Naive thymus-derived CD4-positive, alpha-beta T cell (primary cell): ENCODE measurements at regions of chr1 and their contacts with region 1.

Region 1: GRCh38 chr1:209692745-209693504 is 11.7 kb upstream of the HSD11B1 start:
- DNase-seq: peak; percentile 36 to 66 (median 57)
- ATAC-seq: peak; percentile 75
- H3K4me3 ChIP-seq: no peak overlapping the region
- H3K4me3 Mint-ChIP-seq: no peak overlapping the region
- H3K27ac ChIP-seq: no peak overlapping the region
- H3K27ac Mint-ChIP-seq: peak overlapping the region in 5 of 9 donors; percentile 14 to 74 (median 37)
- H3K4me1 ChIP-seq: peaks cover 0 to 19% of the 10 kb centered on the region in 2 donors
- H3K4me1 Mint-ChIP-seq: peaks cover 16 to 48% (median 30%) of the 10 kb centered on the region in 7 donors
- H3K27me3 ChIP-seq: no peaks in the 10 kb centered on the region
- H3K27me3 Mint-ChIP-seq: no peaks in the 10 kb centered on the region

Region 2: GRCh38 chr1:209202830-209203439 is 490.0 kb before region 1 on chr1:
- CTCF ChIA-PET with region 1: no interaction called
- POLR2A ChIA-PET with region 1: no interaction called
- intact Hi-C with region 1: loop called in 1 of 2 experiments (anchors 5 kb)
- DNase-seq: peak in 3 of 9 donors; percentile 3 to 13 (median 10)
- ATAC-seq: no peak
- H3K4me3 ChIP-seq: no peak overlapping the region
- H3K4me3 Mint-ChIP-seq: no peak overlapping the region
- H3K27ac ChIP-seq: no peak overlapping the region
- H3K27ac Mint-ChIP-seq: no peak overlapping the region
- H3K4me1 ChIP-seq: no peaks in the 10 kb centered on the region
- H3K4me1 Mint-ChIP-seq: peaks cover 0 to 7% (median 4%) of the 10 kb centered on the region in 7 donors
- H3K27me3 ChIP-seq: no peaks in the 10 kb centered on the region
- H3K27me3 Mint-ChIP-seq: peaks cover 24 to 53% (median 38%) of the 10 kb centered on the region in 5 donors

Region 3: GRCh38 chr1:209554761-209555611 is 137.9 kb before region 1 on chr1:
- CTCF ChIA-PET with region 1: no interaction called
- POLR2A ChIA-PET with region 1: no interaction called
- intact Hi-C with region 1: no loop called
- DNase-seq: no peak
- ATAC-seq: no peak
- H3K4me3 ChIP-seq: no peak overlapping the region
- H3K4me3 Mint-ChIP-seq: no peak overlapping the region
- H3K27ac ChIP-seq: no peak overlapping the region
- H3K27ac Mint-ChIP-seq: no peak overlapping the region
- H3K4me1 ChIP-seq: no peaks in the 10 kb centered on the region
- H3K4me1 Mint-ChIP-seq: no peaks in the 10 kb centered on the region
- H3K27me3 ChIP-seq: no peaks in the 10 kb centered on the region
- H3K27me3 Mint-ChIP-seq: peaks cover 0 to 24% (median 0%) of the 10 kb centered on the region in 5 donors

Region 4: GRCh38 chr1:209576798-209577197 is 116.1 kb before region 1 on chr1:
- CTCF ChIA-PET with region 1: interaction called, 12 read pairs
- POLR2A ChIA-PET with region 1: no interaction called
- intact Hi-C with region 1: loop called (anchors 1 kb)
- DNase-seq: peak in 8 of 9 donors; percentile 29 to 77 (median 47)
- ATAC-seq: peak; percentile 85
- H3K4me3 ChIP-seq: no peak overlapping the region
- H3K4me3 Mint-ChIP-seq: no peak overlapping the region
- H3K27ac ChIP-seq: no peak overlapping the region
- H3K27ac Mint-ChIP-seq: no peak overlapping the region
- H3K4me1 ChIP-seq: no peaks in the 10 kb centered on the region
- H3K4me1 Mint-ChIP-seq: peaks cover 0 to 6% (median 0%) of the 10 kb centered on the region in 7 donors
- H3K27me3 ChIP-seq: no peaks in the 10 kb centered on the region
- H3K27me3 Mint-ChIP-seq: peaks cover 0 to 35% (median 5%) of the 10 kb centered on the region in 5 donors

Region 5: DNA sequence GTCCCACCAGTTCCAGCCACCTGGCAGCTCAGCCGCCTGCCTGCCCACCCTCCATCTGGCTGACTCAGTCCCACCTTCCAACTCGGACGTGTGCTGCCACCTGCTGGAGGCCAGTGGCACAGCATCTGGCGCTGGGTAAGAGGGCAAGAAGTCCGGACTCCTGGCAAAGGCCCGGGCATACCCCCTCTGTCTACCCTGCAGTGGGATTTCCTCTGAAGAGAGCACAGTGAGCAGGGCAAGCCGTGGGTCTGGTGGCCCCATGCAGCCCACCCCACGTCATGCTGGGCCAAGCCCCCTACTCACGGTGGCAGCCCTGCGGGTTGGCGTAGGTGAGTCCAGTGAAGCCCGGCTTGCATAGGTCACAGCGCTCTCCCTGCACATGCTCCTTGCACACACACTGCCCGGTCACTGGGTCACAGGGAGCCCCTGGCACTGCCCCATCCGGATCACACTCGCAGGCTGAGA is 65.2 kb before region 1 on chr1:
- CTCF ChIA-PET with region 1: interaction called, 3 read pairs
- POLR2A ChIA-PET with region 1: no interaction called
- intact Hi-C with region 1: loop called (anchors 1 to 2 kb)
- DNase-seq: peak; percentile 29 to 85 (median 61)
- ATAC-seq: peak; percentile 79
- H3K4me3 ChIP-seq: no peak overlapping the region
- H3K4me3 Mint-ChIP-seq: no peak overlapping the region
- H3K27ac ChIP-seq: no peak overlapping the region
- H3K27ac Mint-ChIP-seq: no peak overlapping the region
- H3K4me1 ChIP-seq: no peaks in the 10 kb centered on the region
- H3K4me1 Mint-ChIP-seq: peaks cover 0 to 14% (median 3%) of the 10 kb centered on the region in 7 donors
- H3K27me3 ChIP-seq: no peaks in the 10 kb centered on the region
- H3K27me3 Mint-ChIP-seq: no peaks in the 10 kb centered on the region

Region 6: GRCh38 chr1:209674957-209675564 is 17.9 kb before region 1 on chr1 and contains the start of gene G0S2:
- CTCF ChIA-PET with region 1: interaction called, 8 read pairs
- POLR2A ChIA-PET with region 1: no interaction called
- intact Hi-C with region 1: loop called in 1 of 2 experiments (anchors 2 kb)
- DNase-seq: peak in 3 of 9 donors; percentile 2 to 70 (median 15)
- ATAC-seq: peak; percentile 64
- H3K4me3 ChIP-seq: peak within 1 kb of the TSS; percentile 40
- H3K4me3 Mint-ChIP-seq: peak within 1 kb of the TSS; percentile 47 to 88 (median 80)
- H3K27ac ChIP-seq: no peak within 1 kb of the TSS
- H3K27ac Mint-ChIP-seq: peak within 1 kb of the TSS in 2 of 9 donors; percentile 36 to 73
- H3K4me1 ChIP-seq: peaks cover 10 to 18% of the 10 kb centered on the region in 2 donors
- H3K4me1 Mint-ChIP-seq: peaks cover 27 to 74% (median 43%) of the 10 kb centered on the region in 7 donors
- H3K27me3 ChIP-seq: no peaks in the 10 kb centered on the region
- H3K27me3 Mint-ChIP-seq: peaks cover 27 to 61% (median 55%) of the 10 kb centered on the region in 5 donors
- total RNA-seq, gene G0S2: 17.2 to 128 (median 81.1) TPM in 3 of 5 experiments, not detected in the others